ENCODE measurements at regions of chr7 and their contacts with region 1.

Region 1: GRCh38 chr7:37359662-37360444 is 88.8 kb downstream of the ELMO1 start:
- DNase-seq: no peak
- ATAC-seq: no peak
- H3K4me3 ChIP-seq: no peak overlapping the region
- H3K27ac ChIP-seq: peak overlapping the region in 1 of 12 donors; percentile 20
- H3K4me1 ChIP-seq: peaks cover 0 to 56% (median 24%) of the 10 kb centered on the region in 12 donors
- H3K27me3 ChIP-seq: no peaks in the 10 kb centered on the region
- CTCF ChIP-seq: no peak
- POLR2A ChIP-seq: no peak

Region 2: DNA sequence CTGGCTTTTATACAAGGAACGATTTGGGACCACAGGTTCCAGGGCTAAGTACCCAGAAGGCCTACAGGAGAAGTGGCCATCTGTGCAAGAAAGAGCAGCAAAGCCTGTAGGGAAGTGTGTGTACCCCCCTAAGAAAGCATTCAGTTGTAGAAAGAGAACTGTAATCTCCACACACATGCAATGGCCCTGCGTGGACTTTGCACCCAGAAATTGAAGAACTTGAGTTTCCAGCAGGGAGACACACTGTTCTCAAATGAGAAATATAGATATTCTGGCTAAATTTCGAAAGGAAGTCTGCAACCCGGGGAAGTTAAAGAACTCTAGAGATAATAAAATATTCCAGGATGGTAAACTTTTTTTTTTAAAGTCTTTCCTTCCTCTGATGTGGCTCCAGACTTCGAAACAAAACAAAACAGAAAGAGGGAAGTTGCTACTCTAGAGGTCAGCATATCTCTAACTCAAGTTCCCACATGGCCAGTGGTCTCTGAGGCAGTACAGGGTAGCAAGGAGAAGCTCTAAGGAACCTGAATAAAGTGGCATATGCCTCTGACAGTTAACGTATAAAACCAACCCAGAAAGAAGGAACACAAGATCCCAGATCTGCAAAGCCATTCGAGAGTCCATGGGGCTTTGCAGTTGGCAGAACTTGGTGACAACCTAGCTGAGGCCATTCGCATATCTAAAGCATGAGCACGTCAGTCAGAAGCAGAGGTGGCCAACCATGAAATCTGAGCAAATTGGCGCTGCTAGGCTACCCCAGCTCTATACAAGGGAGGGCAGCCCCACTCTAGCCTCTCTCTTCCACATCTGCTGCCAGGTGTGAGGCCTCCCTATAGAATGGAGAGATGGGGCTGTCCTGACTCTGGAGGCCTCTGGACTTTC is 32.2 kb after region 1 on chr7:
- intact Hi-C with region 1: loop called in 1 of 10 experiments (anchors 5 kb)
- DNase-seq: no peak
- ATAC-seq: peak; percentile 44 to 75 (median 64)
- H3K4me3 ChIP-seq: no peak overlapping the region
- H3K27ac ChIP-seq: peak overlapping the region in 11 of 12 donors; percentile 2 to 79 (median 30)
- H3K4me1 ChIP-seq: peaks cover 0 to 63% (median 15%) of the 10 kb centered on the region in 12 donors
- H3K27me3 ChIP-seq: no peaks in the 10 kb centered on the region
- CTCF ChIP-seq: no peak
- POLR2A ChIP-seq: no peak

Region 3: DNA sequence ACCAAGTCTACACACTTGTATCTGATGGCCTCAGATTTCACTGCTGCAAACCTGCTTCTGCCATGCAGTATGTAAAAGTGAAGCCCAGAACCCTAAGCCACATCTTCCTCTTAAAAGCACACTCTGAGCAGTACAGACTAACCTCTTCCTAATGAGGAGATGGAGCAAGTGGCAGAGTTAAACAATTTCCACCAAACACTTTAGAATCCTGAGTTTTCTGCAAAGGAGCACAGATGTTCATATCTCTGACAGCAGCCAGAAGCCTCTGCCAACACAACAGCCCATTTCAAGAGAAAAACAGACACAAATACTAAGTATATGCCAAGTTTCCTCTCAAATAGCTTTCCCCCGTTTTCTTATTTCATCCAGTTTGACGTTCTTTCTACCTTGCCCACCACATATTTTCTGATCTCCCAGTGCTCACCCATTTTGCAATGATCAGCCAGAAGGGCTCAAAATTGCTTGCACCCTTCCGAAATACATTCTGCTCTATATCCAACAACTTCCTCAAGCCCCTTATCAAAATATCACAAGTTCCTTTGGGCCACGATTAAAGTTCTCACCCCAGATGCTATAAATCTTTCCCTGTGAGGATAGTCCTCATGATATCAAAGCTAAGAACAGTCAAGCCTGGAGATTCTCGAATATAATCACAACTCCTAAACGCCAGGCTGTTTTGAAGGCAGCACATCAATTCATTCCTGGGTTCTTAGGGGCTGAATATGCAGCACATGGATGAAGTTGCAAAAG is 61.3 kb after region 1 on chr7:
- intact Hi-C with region 1: no loop called
- DNase-seq: no peak
- ATAC-seq: peak in 3 of 4 donors; percentile 29 to 54 (median 32)
- H3K4me3 ChIP-seq: no peak overlapping the region
- H3K27ac ChIP-seq: peak overlapping the region in 10 of 12 donors; percentile 6 to 42 (median 29)
- H3K4me1 ChIP-seq: peaks cover 0 to 50% (median 23%) of the 10 kb centered on the region in 12 donors
- H3K27me3 ChIP-seq: no peaks in the 10 kb centered on the region
- CTCF ChIP-seq: no peak
- POLR2A ChIP-seq: no peak

Region 4: DNA sequence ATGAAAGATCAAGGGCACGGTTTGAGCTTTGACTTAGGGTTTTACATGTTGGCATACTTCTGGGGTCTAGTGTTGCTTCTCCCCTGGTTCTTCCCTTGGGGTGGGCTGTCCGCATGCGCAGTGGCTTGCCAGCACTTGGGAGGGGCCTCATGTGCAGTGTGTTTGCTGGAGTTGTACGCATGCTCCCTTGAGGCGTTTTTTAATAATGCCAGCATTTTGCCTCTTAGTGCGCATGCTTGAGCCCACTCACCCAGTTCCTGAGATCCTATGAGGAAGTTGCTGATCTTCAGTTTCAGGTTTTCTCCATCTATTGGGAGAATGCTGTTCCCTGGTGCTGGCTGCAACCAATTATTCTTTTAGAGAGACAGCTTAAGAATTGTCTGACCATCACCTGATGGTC is 210.3 kb after region 1 on chr7:
- intact Hi-C with region 1: no loop called
- DNase-seq: no peak
- ATAC-seq: no peak
- H3K4me3 ChIP-seq: no peak overlapping the region
- H3K27ac ChIP-seq: no peak overlapping the region
- H3K4me1 ChIP-seq: peaks cover 0 to 4% (median 0%) of the 10 kb centered on the region in 12 donors
- H3K27me3 ChIP-seq: no peaks in the 10 kb centered on the region
- CTCF ChIP-seq: no peak
- POLR2A ChIP-seq: no peak